K562 (cell line): ENCODE measurements at regions of chr9 and their contacts with region 1.

Region 1: GRCh38 chr9:122099271-122099869 is 6.3 kb upstream of the TTLL11 start:
- DNase-seq: peak; percentile 76 to 88 (median 80)
- ATAC-seq: peak; percentile 90
- H3K4me3 ChIP-seq: no peak overlapping the region
- H3K27ac ChIP-seq: no peak overlapping the region
- H3K4me1 ChIP-seq: no peaks in the 10 kb centered on the region; a peak in 2 of 5 replicates
- H3K27me3 ChIP-seq: peaks cover 0 to 11% of the 10 kb centered on the region in 2 experiments; a peak in 1 of 5 replicates
- CTCF ChIP-seq: peak; percentile 85 to 90 (median 90)
- EP300 ChIP-seq: no peak
- POLR2A ChIP-seq: no peak
- RAD21 ChIP-seq: peak; percentile 73 to 82

Region 2: GRCh38 chr9:121902461-121903135 is 196.8 kb before region 1 on chr9:
- CTCF ChIA-PET with region 1: no interaction called
- POLR2A ChIA-PET with region 1: no interaction called
- in situ Hi-C with region 1: no loop called
- intact Hi-C with region 1: no loop called
- DNase-seq: peak in 1 of 4 experiments; percentile 8
- ATAC-seq: no peak
- H3K4me3 ChIP-seq: no peak overlapping the region
- H3K27ac ChIP-seq: no peak overlapping the region
- H3K4me1 ChIP-seq: no peaks in the 10 kb centered on the region
- H3K27me3 ChIP-seq: peaks cover 5 to 7% of the 10 kb centered on the region in 2 experiments; a peak in 3 of 5 replicates
- CTCF ChIP-seq: no peak
- EP300 ChIP-seq: no peak
- POLR2A ChIP-seq: no peak
- RAD21 ChIP-seq: no peak

Region 3: DNA sequence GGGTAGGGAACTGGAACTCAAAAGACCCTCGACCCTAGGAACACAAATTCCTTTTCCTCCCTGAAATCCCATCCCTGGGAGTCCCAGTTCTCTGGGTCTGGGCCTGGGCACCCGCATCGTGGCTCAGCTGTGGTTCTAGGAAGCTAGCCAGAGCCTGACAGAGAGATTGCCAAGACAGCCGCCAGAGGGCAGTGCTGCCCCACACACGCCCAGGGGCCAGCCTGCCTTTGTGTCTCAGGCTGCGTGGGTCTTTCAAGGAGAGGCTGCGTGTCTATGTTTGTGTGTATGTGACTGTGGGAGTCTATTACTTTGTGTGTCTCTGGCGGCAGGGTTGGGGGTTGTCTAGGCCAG is 25.8 kb after region 1 on chr9:
- CTCF ChIA-PET with region 1: interaction called, 42 read pairs
- POLR2A ChIA-PET with region 1: interaction called, 4 read pairs
- in situ Hi-C with region 1: no loop called
- intact Hi-C with region 1: loop called (anchors 1 kb)
- DNase-seq: peak; percentile 87 to 88 (median 88)
- ATAC-seq: peak; percentile 91
- H3K4me3 ChIP-seq: no peak overlapping the region
- H3K27ac ChIP-seq: no peak overlapping the region
- H3K4me1 ChIP-seq: peaks cover 0 to 30% of the 10 kb centered on the region in 2 experiments; a peak in 3 of 5 replicates
- H3K27me3 ChIP-seq: peaks cover 0 to 18% of the 10 kb centered on the region in 2 experiments; a peak in 3 of 5 replicates
- CTCF ChIP-seq: peak; percentile 94 to 96 (median 96)
- EP300 ChIP-seq: no peak
- POLR2A ChIP-seq: no peak
- RAD21 ChIP-seq: peak; percentile 99 to 100